Activated CD4-positive, alpha-beta T cell treated with anti-CD3 and anti-CD28 coated beads, Interleukin-2, amount 10 ng/mL, durations not matched to agents 24 days and 14 days (primary cell): ENCODE measurements at regions of chr17 and their contacts with region 1.

Region 1: GRCh38 chr17:7014261-7014994 is 2.0 kb downstream of the RNASEK start:
- DNase-seq: peak; percentile 99
- H3K4me3 Mint-ChIP-seq: peak overlapping the region; percentile 97
- H3K27ac Mint-ChIP-seq: peak overlapping the region; percentile 99
- H3K4me1 Mint-ChIP-seq: peaks cover 56% of the 10 kb centered on the region
- H3K27me3 Mint-ChIP-seq: no peaks in the 10 kb centered on the region

Region 2: GRCh38 chr17:6651357-6651918 is 363.0 kb before region 1 on chr17 and contains the starts of genes C17orf100 and MED31:
- intact Hi-C with region 1: loop called (anchors 2 kb)
- DNase-seq: peak; percentile 99
- H3K4me3 Mint-ChIP-seq: peak within 1 kb of the TSS; percentile 93
- H3K27ac Mint-ChIP-seq: peak within 1 kb of the TSS; percentile 99
- H3K4me1 Mint-ChIP-seq: peaks cover 50% of the 10 kb centered on the region
- H3K27me3 Mint-ChIP-seq: peaks cover 16% of the 10 kb centered on the region
- total RNA-seq, gene C17orf100: 1.8 and 1.9 TPM in 2 replicates
- total RNA-seq, gene MED31: 24.3 and 25.7 TPM in 2 replicates

Region 3: DNA sequence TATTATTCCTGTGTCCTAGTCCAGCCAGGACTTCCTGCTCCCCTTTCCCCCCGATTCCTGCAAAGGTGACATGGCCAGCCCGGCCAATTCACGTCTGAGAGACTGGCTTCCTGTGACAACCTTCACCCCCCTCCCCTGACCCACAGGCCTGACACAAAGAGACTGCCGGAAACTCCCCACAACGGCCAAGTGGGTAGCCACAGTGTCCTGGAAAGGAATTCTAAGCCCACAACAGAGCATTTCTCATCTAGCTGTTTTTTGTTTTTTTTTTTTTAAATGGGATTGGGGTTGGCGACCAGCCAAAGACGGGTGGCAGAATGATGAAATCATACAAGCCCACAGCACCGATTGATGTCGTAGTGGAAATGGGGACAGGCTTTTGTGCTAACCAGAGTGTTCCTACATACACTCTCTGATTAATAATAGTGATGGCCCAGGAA is 261.4 kb before region 1 on chr17:
- intact Hi-C with region 1: loop called (anchors 10 kb)
- DNase-seq: no peak
- H3K4me3 Mint-ChIP-seq: peak overlapping the region; percentile 17
- H3K27ac Mint-ChIP-seq: peak overlapping the region; percentile 57
- H3K4me1 Mint-ChIP-seq: peaks cover 38% of the 10 kb centered on the region
- H3K27me3 Mint-ChIP-seq: peaks cover 17% of the 10 kb centered on the region

Region 4: DNA sequence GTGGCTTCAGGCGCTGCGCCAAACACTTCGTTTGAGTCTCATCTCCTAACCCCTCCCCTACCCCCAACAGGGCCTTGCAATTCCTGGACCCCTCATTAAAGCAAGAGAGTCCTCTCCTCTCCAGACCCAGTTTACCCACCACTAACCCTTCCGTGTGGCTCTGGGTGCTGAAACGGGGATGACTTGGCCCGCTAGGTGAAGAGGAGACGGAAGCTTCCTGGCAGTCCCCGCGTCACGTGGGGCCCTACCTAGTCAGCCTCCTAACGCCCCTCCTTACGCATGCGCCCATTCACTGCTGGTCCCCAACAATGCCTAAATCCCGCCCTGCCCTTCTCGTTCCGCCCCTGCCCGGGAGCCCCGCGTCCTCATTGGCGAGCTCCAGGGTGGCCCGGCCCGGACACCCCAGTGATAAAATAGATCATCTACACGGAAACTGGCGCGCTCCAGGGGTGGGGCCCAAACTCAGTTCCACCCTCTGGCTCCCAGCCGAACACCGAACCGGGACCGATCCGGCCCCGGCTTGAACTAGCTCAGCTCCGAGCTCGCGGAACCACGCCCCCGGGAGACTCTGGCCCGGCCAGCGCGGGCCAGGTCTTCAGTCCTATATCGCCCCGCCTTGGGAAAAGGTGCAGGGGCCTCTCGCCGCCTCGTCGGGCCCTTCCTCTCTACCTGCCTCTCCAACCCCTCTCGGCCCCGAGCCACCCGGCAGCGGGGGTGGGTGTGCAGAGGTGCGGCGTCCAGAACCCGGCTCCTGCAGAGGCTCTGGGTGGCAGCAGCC is 21.4 kb after region 1 on chr17 and contains the start of gene SLC16A13:
- intact Hi-C with region 1: loop called (anchors 1 kb)
- DNase-seq: peak; percentile 100
- H3K4me3 Mint-ChIP-seq: peak within 1 kb of the TSS; percentile 98
- H3K27ac Mint-ChIP-seq: peak within 1 kb of the TSS; percentile 99
- H3K4me1 Mint-ChIP-seq: peaks cover 51% of the 10 kb centered on the region
- H3K27me3 Mint-ChIP-seq: no peaks in the 10 kb centered on the region
- total RNA-seq, gene SLC16A13: 12.4 and 13.5 TPM in 2 replicates

Region 5: DNA sequence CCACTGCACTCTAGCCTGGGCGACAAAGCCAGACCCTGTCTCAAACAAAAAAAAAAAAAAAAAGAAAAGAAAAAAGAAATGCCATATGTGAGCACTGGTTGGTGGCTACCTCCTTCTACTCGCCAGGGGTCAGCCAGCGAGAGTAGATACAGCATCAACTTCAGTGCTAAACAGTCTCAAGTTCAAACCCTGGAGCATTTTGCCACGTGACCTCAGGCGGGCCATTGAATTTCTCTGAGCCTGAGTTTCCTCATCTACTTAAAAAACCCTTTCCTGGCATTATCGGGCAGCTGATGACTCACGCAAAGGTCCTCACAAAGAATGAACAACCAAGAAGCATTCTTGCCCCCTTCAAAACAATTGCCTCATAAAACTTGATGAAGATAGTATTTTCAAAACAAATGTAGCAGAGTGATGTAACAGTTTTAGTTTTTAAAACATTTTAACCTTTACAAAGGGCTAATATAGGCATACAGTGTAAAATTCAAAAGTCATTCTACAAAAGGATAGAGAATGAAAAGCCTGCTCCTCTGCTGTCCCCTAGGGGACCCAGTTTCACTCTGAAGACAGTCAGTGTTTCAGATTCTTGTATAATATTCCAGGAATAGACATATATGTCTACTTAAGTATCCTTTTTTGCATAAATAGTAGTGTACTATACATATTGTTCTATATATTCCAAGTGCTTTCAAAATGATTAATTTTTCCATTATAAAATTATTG is 731.5 kb after region 1 on chr17:
- intact Hi-C with region 1: no loop called
- DNase-seq: no peak
- H3K4me3 Mint-ChIP-seq: no peak overlapping the region
- H3K27ac Mint-ChIP-seq: no peak overlapping the region
- H3K4me1 Mint-ChIP-seq: no peaks in the 10 kb centered on the region
- H3K27me3 Mint-ChIP-seq: peaks cover 18% of the 10 kb centered on the region